A673 (cell line): ENCODE measurements at regions of chr1 and their contacts with region 1.

Region 1: GRCh38 chr1:155339515-155340097 is 18.9 kb downstream of the RUSC1 start:
- DNase-seq: no peak
- H3K4me3 ChIP-seq: no peak overlapping the region
- H3K27ac ChIP-seq: no peak overlapping the region
- H3K4me1 ChIP-seq: no peaks in the 10 kb centered on the region
- H3K27me3 ChIP-seq: no peaks in the 10 kb centered on the region
- CTCF ChIP-seq: no peak

Region 2: GRCh38 chr1:155479205-155479604 is 139.6 kb after region 1 on chr1:
- CTCF ChIA-PET with region 1: no interaction called
- POLR2A ChIA-PET with region 1: no interaction called
- intact Hi-C with region 1: no loop called
- DNase-seq: peak; percentile 41
- H3K4me3 ChIP-seq: no peak overlapping the region
- H3K27ac ChIP-seq: no peak overlapping the region
- H3K4me1 ChIP-seq: peaks cover 3% of the 10 kb centered on the region
- H3K27me3 ChIP-seq: no peaks in the 10 kb centered on the region
- CTCF ChIP-seq: no peak

Region 3: GRCh38 chr1:155607708-155608107 is 268.1 kb after region 1 on chr1:
- CTCF ChIA-PET with region 1: interaction called, 13 read pairs
- POLR2A ChIA-PET with region 1: no interaction called
- intact Hi-C with region 1: no loop called
- DNase-seq: peak; percentile 32
- H3K4me3 ChIP-seq: no peak overlapping the region
- H3K27ac ChIP-seq: no peak overlapping the region
- H3K4me1 ChIP-seq: no peaks in the 10 kb centered on the region
- H3K27me3 ChIP-seq: no peaks in the 10 kb centered on the region
- CTCF ChIP-seq: no peak